Mammary epithelial cell (primary cell): ENCODE measurements at regions of chr1 and their contacts with region 1.

Region 1: GRCh38 chr1:48061162-48062136 is 64.3 kb upstream of the TRABD2B start:
- DNase-seq: peak; percentile 55
- H3K4me3 ChIP-seq: no peak overlapping the region
- H3K27ac ChIP-seq: no peak overlapping the region
- H3K4me1 ChIP-seq: no peaks in the 10 kb centered on the region
- H3K27me3 ChIP-seq: no peaks in the 10 kb centered on the region
- CTCF ChIP-seq: peak; percentile 74 to 82

Region 2: DNA sequence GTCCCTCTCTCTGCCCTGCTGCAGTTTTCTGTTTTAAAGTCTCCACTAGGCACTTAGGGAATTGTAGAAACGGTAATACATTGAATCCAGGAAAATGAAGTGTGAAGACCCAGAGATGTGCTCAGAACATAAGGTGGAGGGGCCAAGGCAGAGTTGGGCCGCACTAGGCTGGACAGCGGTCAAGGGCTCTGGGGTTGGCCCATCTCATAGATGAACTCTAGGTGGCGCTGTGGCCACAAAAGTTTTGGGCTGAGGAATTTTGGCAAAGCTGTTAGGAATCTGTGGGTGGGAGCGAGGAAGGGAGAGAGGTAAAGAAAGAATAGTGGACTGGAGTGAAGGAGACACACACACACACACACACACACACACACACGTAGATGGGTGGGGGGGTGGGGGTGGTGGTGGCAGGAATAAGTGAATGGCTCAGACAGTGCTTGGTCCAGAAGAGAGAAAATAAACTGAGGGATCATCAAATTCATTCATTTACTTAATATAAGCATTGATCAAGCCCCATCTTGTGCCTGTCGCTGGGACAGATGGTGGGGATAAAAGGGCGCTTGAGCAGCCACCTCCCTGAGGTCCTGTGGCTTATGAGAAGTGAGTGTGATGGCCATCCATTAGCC is 322.8 kb before region 1 on chr1:
- CTCF ChIA-PET with region 1: no interaction called
- dilution Hi-C with region 1: no loop called
- in situ Hi-C with region 1: loop called (anchors 10 to 25 kb)
- intact Hi-C with region 1: loop called (anchors 1 kb)
- DNase-seq: peak; percentile 32
- H3K4me3 ChIP-seq: no peak overlapping the region
- H3K27ac ChIP-seq: no peak overlapping the region
- H3K4me1 ChIP-seq: no peaks in the 10 kb centered on the region
- H3K27me3 ChIP-seq: no peaks in the 10 kb centered on the region
- CTCF ChIP-seq: peak; percentile 76 to 89

Region 3: DNA sequence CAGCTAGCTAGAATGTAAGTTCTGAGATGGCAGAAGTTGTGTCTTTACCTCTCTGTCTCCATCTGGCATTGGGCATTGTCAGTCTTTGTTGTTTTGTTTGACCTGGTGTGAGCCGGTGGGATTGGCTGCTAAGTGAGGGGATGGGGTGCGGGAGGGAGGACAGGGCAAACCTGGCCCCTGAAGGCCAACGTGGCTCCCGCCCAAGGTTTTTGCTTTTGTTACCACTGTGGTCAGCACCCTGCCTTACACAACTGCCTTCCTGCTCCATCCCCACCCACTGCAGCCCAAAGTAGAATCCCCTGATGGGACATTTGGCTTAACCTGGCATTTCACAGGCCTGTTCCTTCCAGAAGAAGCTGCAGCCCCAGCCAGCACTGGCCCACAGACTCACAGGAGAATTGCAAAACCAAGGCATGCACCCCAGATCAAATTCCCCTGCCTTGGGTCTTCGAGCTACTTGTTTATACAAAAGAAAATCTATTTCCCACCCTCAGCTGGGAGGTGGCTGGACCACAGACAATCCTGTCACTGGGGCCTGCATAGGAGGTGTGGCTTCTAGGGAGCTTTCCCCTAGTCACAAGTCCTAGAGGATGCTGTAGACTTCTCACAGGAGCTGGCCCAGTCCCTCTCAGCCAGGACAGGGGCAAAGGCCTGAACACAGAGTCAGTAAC is 211.7 kb before region 1 on chr1:
- CTCF ChIA-PET with region 1: no interaction called
- dilution Hi-C with region 1: loop called (anchors 5 kb)
- in situ Hi-C with region 1: no loop called
- intact Hi-C with region 1: no loop called
- DNase-seq: no peak
- H3K4me3 ChIP-seq: no peak overlapping the region
- H3K27ac ChIP-seq: no peak overlapping the region
- H3K4me1 ChIP-seq: no peaks in the 10 kb centered on the region
- H3K27me3 ChIP-seq: no peaks in the 10 kb centered on the region
- CTCF ChIP-seq: no peak

Region 4: DNA sequence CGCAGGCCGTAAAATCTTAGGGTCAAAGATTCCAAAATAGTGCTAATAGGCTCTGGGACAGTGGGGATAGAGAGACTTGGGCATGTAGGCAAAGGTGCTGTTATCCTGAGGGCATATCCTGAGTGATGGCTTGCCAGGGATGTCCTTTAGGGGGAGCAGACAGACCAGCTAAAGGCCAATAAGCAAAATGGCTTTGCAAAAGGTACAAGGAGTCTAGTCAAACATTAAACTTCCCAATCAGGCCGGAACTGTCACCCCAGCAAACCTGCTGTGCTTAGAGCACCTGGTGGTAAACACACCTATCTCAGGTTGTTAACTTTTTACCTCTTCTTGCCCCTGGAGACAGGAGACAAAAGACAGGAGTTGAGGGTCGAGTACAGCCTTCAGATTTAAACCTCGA is 113.3 kb before region 1 on chr1:
- CTCF ChIA-PET with region 1: no interaction called
- dilution Hi-C with region 1: no loop called
- in situ Hi-C with region 1: no loop called
- intact Hi-C with region 1: loop called (anchors 1 kb)
- DNase-seq: peak; percentile 27
- H3K4me3 ChIP-seq: no peak overlapping the region
- H3K27ac ChIP-seq: no peak overlapping the region
- H3K4me1 ChIP-seq: peaks cover 12% of the 10 kb centered on the region
- H3K27me3 ChIP-seq: no peaks in the 10 kb centered on the region
- CTCF ChIP-seq: peak; percentile 33 to 40